Mucosa of descending colon (tissue), 3 donors: ENCODE measurements at regions of chr14 and their contacts with region 1.

Region 1: DNA sequence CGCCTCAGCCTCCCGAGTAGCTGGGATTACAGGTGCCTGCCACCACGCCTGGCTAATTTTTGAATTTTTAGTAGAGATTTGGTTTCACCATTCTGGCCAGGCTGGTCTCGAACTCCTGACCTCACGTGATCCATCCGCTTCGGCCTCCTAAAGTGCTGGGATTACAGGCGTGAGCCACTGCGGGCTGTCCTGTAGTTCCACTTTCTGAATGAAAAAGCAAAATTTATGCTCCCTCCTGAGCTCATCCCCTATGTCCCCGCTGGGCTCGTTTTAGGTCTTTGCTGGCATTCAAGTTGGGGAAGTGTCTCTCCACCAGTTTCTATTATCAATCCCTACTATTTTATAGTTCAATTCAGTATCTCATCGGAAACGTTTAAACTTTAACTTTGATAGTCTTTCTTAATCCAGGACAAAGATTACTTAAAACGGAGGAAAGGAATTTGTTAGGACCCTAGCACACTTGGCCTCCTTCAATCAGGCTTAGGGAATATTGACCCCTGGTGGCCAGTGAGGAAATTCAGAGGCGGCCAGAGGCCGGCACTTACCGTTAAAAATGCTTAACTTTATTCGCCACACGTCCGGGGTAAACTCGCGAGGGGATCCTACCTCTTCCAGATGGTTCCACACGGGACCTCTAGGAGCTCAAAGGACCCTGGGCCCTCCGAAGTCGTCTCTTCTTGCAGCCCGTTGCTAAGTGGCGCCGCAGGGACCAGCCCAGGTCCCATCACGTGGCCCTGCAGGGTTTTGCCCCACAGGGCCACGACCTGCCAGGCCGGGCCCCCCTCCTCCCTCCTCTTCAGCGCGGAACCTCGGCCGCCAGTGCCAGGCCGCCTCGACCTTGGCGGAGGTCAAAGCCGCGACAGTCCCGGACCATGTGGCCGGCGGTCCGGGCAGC is 11.4 kb upstream of the DNAL1 start:
- DNase-seq: peak in 2 of 3 donors; percentile 68 to 77
- ATAC-seq: peak; percentile 90
- H3K4me3 ChIP-seq: no peak overlapping the region
- H3K4me1 ChIP-seq: peaks cover 4% of the 10 kb centered on the region
- CTCF ChIP-seq: peak; percentile 79

Region 2: GRCh38 chr14:73491256-73492042 is 141.9 kb before region 1 on chr14:
- intact Hi-C with region 1: loop called in 1 of 2 experiments (anchors 10 kb)
- DNase-seq: peak; percentile 76 to 84 (median 83)
- ATAC-seq: peak; percentile 83
- H3K4me3 ChIP-seq: peak overlapping the region; percentile 65
- H3K4me1 ChIP-seq: peaks cover 24% of the 10 kb centered on the region
- CTCF ChIP-seq: no peak

Region 3: GRCh38 chr14:73503648-73504047 is 129.7 kb before region 1 on chr14:
- intact Hi-C with region 1: loop called (anchors 5 to 10 kb)
- DNase-seq: no peak
- ATAC-seq: no peak
- H3K4me3 ChIP-seq: no peak overlapping the region
- H3K4me1 ChIP-seq: no peaks in the 10 kb centered on the region
- CTCF ChIP-seq: no peak